ENCODE measurements at regions of chr2 and their contacts with region 1.

Region 1: GRCh38 chr2:178112202-178113152 is at the start of gene RBM45:
- DNase-seq: peak; percentile 87 to 94
- H3K4me3 ChIP-seq: peak within 1 kb of the TSS; percentile 65 to 89 (median 86)
- H3K27ac ChIP-seq: no peak within 1 kb of the TSS
- H3K4me1 ChIP-seq: peaks cover 0 to 4% (median 0%) of the 10 kb centered on the region in 4 experiments; a peak in 1 of 7 replicates
- H3K27me3 ChIP-seq: no peaks in the 10 kb centered on the region
- CTCF ChIP-seq: peak; percentile 87 to 95 (median 91)
- EP300 ChIP-seq: peak in 1 of 2 experiments; percentile 43; a peak in 1 of 3 replicates
- POLR2A ChIP-seq: peak in 1 of 2 experiments; percentile 87; a peak in 2 of 3 replicates
- RAD21 ChIP-seq: peak; percentile 72 to 83
- total RNA-seq, gene RBM45: 10.4 and 11.9 TPM in 2 replicates

Region 2: GRCh38 chr2:177983183-177983788 is 129.2 kb before region 1 on chr2:
- CTCF ChIA-PET with region 1: interaction called, 17 read pairs
- POLR2A ChIA-PET with region 1: no interaction called
- DNase-seq: peak in 1 of 2 experiments; percentile 15
- H3K4me3 ChIP-seq: no peak overlapping the region
- H3K27ac ChIP-seq: no peak overlapping the region
- H3K4me1 ChIP-seq: no peaks in the 10 kb centered on the region
- H3K27me3 ChIP-seq: no peaks in the 10 kb centered on the region
- CTCF ChIP-seq: peak; percentile 52 to 84 (median 78)
- EP300 ChIP-seq: no peak
- POLR2A ChIP-seq: no peak
- RAD21 ChIP-seq: peak; percentile 82 to 84

Region 3: GRCh38 chr2:178101321-178102079 is 11.0 kb before region 1 on chr2:
- CTCF ChIA-PET with region 1: interaction called, 20 read pairs
- POLR2A ChIA-PET with region 1: no interaction called
- DNase-seq: no peak
- H3K4me3 ChIP-seq: no peak overlapping the region
- H3K27ac ChIP-seq: no peak overlapping the region
- H3K4me1 ChIP-seq: no peaks in the 10 kb centered on the region
- H3K27me3 ChIP-seq: no peaks in the 10 kb centered on the region
- CTCF ChIP-seq: no peak
- EP300 ChIP-seq: no peak
- POLR2A ChIP-seq: no peak
- RAD21 ChIP-seq: no peak

Region 4: DNA sequence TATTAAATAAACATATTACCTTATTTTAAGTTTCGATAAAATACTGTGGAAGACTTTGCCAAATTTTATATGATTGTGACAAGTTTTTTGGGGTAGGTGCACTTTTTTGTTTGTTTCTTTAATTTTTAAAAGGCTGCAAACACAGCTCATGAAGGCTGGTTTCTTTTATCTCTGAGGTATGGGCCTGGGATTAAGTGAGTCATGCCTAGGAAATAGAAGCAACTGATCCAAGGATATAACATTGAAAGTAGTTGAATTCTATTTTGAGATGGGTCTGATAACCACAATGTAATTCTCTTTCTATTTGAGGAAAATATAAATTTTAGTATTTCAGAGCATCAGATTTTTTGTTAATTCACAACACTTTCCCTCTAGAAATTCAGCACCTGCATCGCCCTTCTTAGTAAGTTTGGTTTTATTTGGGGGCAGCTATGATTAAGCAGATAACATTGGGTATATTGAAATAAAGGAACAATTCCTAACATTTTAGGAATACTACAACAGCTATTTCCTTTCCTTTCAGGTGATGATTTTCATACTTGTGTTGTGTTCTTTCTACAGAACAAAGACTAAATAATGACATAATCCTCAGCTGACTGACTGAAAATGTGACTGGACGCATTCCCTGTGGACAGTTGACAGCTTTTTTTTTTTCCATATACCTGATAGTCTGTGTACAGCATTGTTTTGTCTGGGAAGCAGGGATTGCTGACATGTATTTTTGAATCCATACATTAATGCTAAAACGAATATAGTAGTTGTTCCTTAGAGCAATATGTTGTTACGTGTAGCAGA is 16.6 kb after region 1 on chr2:
- CTCF ChIA-PET with region 1: interaction called, 65 read pairs
- POLR2A ChIA-PET with region 1: interaction called, 6 read pairs
- DNase-seq: no peak
- H3K4me3 ChIP-seq: no peak overlapping the region
- H3K27ac ChIP-seq: no peak overlapping the region
- H3K4me1 ChIP-seq: peaks cover 0 to 4% (median 2%) of the 10 kb centered on the region in 4 experiments; a peak in 4 of 7 replicates
- H3K27me3 ChIP-seq: no peaks in the 10 kb centered on the region
- CTCF ChIP-seq: no peak
- EP300 ChIP-seq: no peak
- POLR2A ChIP-seq: no peak
- RAD21 ChIP-seq: no peak

Region 5: GRCh38 chr2:178208817-178209216 is 96.3 kb after region 1 on chr2:
- CTCF ChIA-PET with region 1: interaction called, 17 read pairs
- POLR2A ChIA-PET with region 1: no interaction called
- DNase-seq: no peak
- H3K4me3 ChIP-seq: no peak overlapping the region
- H3K27ac ChIP-seq: no peak overlapping the region
- H3K4me1 ChIP-seq: peaks cover 0 to 19% (median 13%) of the 10 kb centered on the region in 4 experiments; a peak in 6 of 7 replicates
- H3K27me3 ChIP-seq: peaks cover 18 to 39% (median 29%) of the 10 kb centered on the region in 4 experiments
- CTCF ChIP-seq: peak in 1 of 3 experiments; percentile 16; a peak in 2 of 4 replicates
- EP300 ChIP-seq: no peak
- POLR2A ChIP-seq: no peak
- RAD21 ChIP-seq: peak in 1 of 2 experiments; percentile 13; a peak in 1 of 4 replicates

Region 6: DNA sequence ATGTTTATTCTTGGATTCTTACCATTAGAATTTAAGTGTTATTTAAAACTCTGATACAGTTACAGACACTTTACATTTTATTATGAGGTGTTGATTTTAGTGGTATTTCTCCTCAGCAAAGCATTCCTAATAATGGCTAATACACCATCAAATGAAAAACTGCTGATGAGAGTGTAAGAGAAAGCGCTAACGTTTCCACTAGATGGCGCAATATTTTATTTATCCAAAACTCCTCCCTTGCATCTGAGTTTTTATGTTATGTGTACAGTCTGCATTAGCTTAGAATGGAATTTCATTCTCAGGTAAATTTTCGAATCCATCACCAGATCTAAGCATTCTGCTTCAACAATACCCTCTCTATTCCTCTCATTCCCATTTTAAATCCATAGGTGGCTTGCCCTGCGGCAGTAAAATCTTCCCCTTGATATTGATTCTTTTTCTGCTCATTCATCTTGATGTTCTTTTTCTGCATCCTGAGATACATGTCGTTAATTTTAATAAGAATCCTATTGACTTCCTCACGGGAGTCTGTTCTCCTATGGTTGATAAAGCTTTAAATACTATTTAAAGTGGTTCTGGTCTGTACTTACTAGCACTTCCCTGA is 284.6 kb after region 1 on chr2:
- CTCF ChIA-PET with region 1: interaction called, 28 read pairs
- POLR2A ChIA-PET with region 1: no interaction called
- DNase-seq: no peak
- H3K4me3 ChIP-seq: no peak overlapping the region
- H3K27ac ChIP-seq: no peak overlapping the region
- H3K4me1 ChIP-seq: no peaks in the 10 kb centered on the region
- H3K27me3 ChIP-seq: no peaks in the 10 kb centered on the region
- CTCF ChIP-seq: peak in 2 of 3 experiments; percentile 24 to 62; a peak in 2 of 4 replicates
- EP300 ChIP-seq: no peak
- POLR2A ChIP-seq: no peak
- RAD21 ChIP-seq: peak in 1 of 2 experiments; percentile 12; a peak in 3 of 4 replicates

Region 7: DNA sequence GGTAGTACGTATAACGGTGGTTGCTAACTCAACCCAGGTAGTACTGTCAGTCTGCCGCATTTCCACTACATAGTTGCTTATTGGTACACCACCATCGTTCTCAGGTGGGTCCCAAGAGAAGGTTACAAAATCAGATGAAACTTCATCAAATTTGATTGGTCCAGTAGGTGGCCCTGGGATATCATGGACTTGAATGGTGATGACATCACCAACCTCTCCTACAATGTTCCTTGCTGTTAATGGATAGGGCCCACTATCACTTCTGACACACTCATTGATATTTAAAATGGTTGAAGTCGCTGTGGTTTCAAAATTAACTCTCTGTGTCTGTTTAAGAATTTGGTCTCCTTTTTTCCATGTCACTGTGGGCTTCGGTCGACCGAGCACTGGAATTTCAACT is 462.3 kb after region 1 on chr2:
- CTCF ChIA-PET with region 1: no interaction called
- POLR2A ChIA-PET with region 1: no interaction called
- DNase-seq: no peak
- H3K4me3 ChIP-seq: no peak overlapping the region
- H3K27ac ChIP-seq: no peak overlapping the region
- H3K4me1 ChIP-seq: no peaks in the 10 kb centered on the region
- H3K27me3 ChIP-seq: no peaks in the 10 kb centered on the region
- CTCF ChIP-seq: no peak
- EP300 ChIP-seq: no peak
- POLR2A ChIP-seq: no peak
- RAD21 ChIP-seq: no peak

Measured in H1 (cell line).